ENCODE measurements at regions of chr13 and their contacts with region 1.

Region 1: DNA sequence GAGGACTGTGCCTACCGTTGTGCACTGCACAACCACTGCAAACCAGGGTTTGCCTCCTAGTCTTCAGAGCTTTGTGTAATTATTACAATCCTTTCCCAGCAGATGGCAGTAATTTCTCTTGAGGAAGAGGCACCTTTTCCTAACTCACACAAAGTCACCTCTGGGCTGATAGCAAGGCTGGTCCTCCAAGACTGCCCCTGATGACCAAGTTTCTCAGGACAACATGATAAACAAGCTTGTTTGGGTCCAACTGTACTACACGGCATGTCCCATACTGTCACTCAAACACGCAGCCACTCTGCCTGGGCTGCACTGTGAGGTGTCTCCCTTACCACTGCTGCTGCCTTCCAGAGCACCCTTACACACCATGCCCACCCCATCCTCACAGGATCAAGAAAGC is 39.3 kb downstream of the RFXAP start:
- DNase-seq: no peak
- H3K4me3 ChIP-seq: no peak overlapping the region
- H3K27ac ChIP-seq: no peak overlapping the region
- H3K4me1 ChIP-seq: no peaks in the 10 kb centered on the region
- H3K27me3 ChIP-seq: no peaks in the 10 kb centered on the region
- CTCF ChIP-seq: peak; percentile 9 to 42 (median 12)
- POLR2A ChIP-seq: no peak

Region 2: DNA sequence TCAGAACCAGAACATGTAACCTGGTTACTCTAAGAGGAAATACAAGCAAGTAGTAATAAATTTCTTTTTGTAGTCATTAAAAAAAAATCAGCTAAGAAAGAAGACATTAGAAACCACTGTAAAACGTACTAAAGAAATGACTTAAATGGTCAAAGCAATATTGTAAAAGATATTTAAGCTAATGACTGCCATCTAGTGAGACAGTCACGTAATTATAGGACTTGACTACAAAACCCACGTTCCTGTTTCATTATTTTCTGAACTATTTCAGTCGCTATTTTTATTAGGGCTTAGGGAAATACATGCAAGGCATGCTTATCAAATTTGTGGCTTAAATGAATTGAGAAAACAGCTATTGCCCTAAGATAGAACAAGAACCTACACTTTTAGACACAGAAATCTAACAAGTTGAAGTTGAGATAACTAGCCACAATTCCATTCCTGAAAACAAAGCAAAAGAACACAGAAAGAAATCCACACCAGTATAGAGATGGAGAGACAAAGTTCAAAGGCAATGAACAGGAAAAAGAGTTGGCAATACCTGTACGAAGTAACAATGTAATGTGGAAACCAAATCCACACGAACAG is 123.0 kb after region 1 on chr13:
- intact Hi-C with region 1: loop called (anchors 5 kb)
- DNase-seq: no peak
- H3K4me3 ChIP-seq: no peak overlapping the region
- H3K27ac ChIP-seq: no peak overlapping the region
- H3K4me1 ChIP-seq: no peaks in the 10 kb centered on the region
- H3K27me3 ChIP-seq: no peaks in the 10 kb centered on the region
- CTCF ChIP-seq: peak; percentile 11 to 52 (median 28)
- POLR2A ChIP-seq: no peak

Region 3: GRCh38 chr13:37788346-37788745 is 930.1 kb after region 1 on chr13:
- intact Hi-C with region 1: no loop called
- DNase-seq: no peak
- H3K4me3 ChIP-seq: no peak overlapping the region
- H3K27ac ChIP-seq: no peak overlapping the region
- H3K4me1 ChIP-seq: no peaks in the 10 kb centered on the region
- H3K27me3 ChIP-seq: no peaks in the 10 kb centered on the region
- CTCF ChIP-seq: no peak
- POLR2A ChIP-seq: no peak